Activated T-helper 2 cell treated with anti-CD3 and anti-CD28 coated beads, Interferon-gamma antibody, Interleukin-2, Interleukin-4, amounts not matched to agents 10 μg/mL and 5 μg/mL and 100 μg/mL, durations not matched to agents 14 hours and 24 hours and 36 hours (primary cell): ENCODE measurements at regions of chr14 and their contacts with region 1.

Region 1: DNA sequence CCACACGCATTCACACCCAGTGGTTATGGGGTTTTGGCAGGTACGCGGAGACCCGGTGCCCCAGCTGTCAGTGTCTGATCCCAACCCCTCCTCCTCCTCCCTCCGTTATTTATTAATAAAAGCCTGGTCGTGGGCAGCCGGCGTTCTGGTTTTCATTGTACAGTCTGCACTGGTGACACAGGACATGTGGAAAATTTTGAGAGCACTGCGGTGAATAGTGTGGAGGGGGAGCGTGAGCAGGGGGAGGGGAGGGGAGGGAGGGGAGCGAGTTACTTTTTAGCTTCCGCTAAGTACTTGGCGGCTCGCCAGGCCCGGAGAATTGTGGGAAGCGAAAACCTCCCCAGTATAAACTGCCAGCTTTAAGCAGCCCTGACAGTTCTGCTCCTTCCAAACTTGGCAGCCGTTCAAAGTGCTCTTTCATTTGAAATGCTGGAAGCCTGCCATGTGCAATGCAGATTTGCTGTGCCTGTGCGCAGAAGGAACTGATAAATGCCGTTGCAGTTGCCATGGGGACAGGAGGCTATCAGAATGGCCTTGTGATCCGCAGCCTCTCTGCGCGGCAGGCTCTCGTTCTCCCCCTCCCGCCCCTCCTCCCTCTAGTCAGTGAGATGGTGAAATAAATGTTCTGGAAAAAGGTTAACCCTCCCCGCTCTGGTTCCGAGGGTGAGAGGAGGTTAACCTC is 11.7 kb upstream of the IRF2BPL start:
- DNase-seq: peak; percentile 87
- H3K4me3 Mint-ChIP-seq: peak overlapping the region; percentile 76
- H3K27ac Mint-ChIP-seq: peak overlapping the region; percentile 89
- H3K4me1 Mint-ChIP-seq: peaks cover 81% of the 10 kb centered on the region
- H3K27me3 Mint-ChIP-seq: no peaks in the 10 kb centered on the region

Region 2: GRCh38 chr14:77028384-77029231 is 11.6 kb before region 1 on chr14 and contains the start of gene IRF2BPL:
- intact Hi-C with region 1: loop called (anchors 1 kb)
- DNase-seq: peak; percentile 94
- H3K4me3 Mint-ChIP-seq: peak within 1 kb of the TSS; percentile 89
- H3K27ac Mint-ChIP-seq: peak within 1 kb of the TSS; percentile 94
- H3K4me1 Mint-ChIP-seq: peaks cover 49% of the 10 kb centered on the region
- H3K27me3 Mint-ChIP-seq: no peaks in the 10 kb centered on the region
- total RNA-seq, gene IRF2BPL: 34.8 and 35.8 TPM in 2 replicates

Region 3: DNA sequence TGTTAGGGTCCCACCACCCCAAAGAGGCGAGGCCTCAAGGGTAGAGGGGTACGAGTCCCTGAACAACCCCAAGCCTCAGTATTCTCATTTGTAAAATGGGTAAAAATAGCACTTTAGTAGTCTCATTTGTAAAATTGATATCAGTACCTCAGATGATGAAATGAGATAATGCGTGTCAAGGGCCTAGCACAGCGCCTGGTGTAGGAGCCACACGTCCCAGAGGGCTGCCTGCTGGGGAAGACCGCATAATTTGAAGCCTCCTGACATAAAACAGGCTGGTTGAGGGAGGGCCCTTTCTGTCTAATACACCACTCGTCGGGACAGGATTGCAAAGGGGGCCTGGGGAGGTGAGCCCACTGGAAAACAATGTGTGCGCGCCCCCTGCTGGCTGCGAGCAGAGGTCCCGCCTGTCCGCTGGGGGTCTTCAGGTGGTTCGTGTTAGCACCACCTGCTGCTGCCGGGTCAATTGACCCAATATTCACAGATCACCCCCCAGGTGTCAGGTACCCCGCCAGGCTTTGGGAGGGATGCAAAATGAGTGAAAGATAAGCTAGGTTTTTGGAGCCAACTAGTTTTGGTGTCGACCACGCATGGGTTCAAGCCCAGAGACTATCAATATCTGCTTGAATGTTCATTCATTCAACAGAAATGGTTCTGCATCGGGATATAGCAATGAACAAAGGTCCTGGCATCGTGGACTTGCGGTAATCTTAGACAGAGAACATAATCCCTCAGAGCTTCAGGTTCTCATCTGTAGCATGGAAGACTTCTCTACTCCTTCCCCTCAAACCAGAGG is 13.0 kb after region 1 on chr14:
- intact Hi-C with region 1: no loop called
- DNase-seq: peak; percentile 57
- H3K4me3 Mint-ChIP-seq: no peak overlapping the region
- H3K27ac Mint-ChIP-seq: no peak overlapping the region
- H3K4me1 Mint-ChIP-seq: peaks cover 19% of the 10 kb centered on the region
- H3K27me3 Mint-ChIP-seq: no peaks in the 10 kb centered on the region

Region 4: GRCh38 chr14:77593501-77593961 is 553.3 kb after region 1 on chr14:
- intact Hi-C with region 1: no loop called
- DNase-seq: no peak
- H3K4me3 Mint-ChIP-seq: peak overlapping the region; percentile 55
- H3K27ac Mint-ChIP-seq: peak overlapping the region; percentile 72
- H3K4me1 Mint-ChIP-seq: peaks cover 51% of the 10 kb centered on the region
- H3K27me3 Mint-ChIP-seq: no peaks in the 10 kb centered on the region